ENCODE measurements at regions of chr12 and their contacts with region 1.

Region 1: DNA sequence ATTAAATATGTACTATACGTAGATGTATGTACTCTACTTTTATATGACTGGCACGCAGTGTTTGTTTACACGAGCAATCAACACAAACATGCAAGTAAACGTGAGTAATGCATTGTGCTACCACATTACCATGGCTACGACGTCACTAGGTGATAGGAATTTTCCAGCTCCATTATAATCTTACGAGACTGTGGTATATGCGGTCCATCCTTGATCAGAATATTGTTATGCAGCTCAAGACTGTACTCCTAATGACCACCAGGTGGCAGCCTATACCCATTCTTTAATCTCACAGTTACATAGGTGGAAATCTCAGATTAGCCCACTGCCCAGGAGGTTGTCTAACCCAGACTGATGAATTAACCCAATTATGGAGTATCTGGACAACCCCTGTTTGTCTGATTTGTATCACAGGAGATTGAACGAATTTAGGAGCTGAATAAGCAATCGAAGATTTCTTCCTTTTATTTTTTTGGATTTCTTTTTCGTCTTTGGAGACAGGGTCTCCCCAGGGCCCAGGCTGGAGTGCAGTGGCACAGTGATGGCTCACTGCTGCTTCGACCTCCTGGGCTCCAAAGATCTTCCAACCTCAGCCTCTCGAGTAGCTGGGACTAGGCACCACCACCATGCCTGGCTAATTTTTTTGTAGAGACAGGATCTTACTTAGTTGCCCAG is 8.7 kb upstream of the TESPA1 start:
- DNase-seq: no peak
- ATAC-seq: peak; percentile 76
- H3K4me3 ChIP-seq: no peak overlapping the region
- H3K27ac ChIP-seq: no peak overlapping the region
- H3K4me1 ChIP-seq: peaks cover 25% of the 10 kb centered on the region
- H3K27me3 ChIP-seq: no peaks in the 10 kb centered on the region
- CTCF ChIP-seq: peak; percentile 70 to 82 (median 78)
- EP300 ChIP-seq: no peak
- POLR2A ChIP-seq: no peak
- RAD21 ChIP-seq: peak; percentile 95

Region 2: DNA sequence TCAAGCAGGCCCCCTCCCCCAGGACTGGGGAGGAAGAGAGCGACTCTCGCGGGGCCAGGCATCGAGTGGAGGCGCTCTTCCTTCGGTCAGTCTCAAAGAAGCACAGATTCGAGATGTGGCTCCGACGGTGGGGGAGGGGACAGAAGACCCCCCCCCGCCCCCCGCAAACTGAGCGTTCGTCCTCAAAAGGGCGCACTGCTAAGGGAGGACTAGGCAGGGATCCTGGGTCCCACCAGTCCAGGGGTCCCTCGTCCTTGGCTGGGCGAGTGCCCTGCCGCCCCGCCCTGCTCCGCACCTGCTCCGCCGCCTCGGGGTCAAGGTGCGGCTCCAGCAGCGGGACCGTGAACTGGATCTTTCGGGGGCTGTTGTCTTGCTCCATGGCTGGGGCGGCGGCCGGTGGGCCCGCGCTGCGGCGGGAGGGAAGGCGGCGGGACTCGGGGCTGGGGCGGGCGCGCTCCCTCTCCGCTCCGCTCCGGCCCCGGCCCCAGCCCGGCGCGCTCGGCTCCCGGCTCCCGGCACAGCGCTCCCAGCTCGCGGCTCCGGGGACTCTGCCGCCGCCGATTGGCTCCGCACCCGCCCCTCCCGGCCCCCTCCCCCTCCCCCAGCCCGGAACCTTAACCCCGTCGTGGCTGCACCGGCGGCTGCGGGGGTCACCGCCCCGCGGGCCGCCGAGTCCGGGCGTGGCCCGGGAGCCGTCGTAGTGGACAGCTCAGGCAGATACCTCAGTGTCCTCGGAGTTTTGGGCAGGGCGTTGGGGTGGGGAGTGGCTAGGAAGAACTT is 405.0 kb before region 1 on chr12 and contains the start of gene PPP1R1A:
- CTCF ChIA-PET with region 1: no interaction called
- POLR2A ChIA-PET with region 1: no interaction called
- RAD21 ChIA-PET with region 1: no interaction called
- SMC1A ChIA-PET with region 1: no interaction called
- in situ Hi-C with region 1: no loop called
- intact Hi-C with region 1: no loop called
- DNase-seq: no peak
- ATAC-seq: no peak
- H3K4me3 ChIP-seq: no peak within 1 kb of the TSS
- H3K27ac ChIP-seq: no peak within 1 kb of the TSS
- H3K4me1 ChIP-seq: no peaks in the 10 kb centered on the region
- H3K27me3 ChIP-seq: peaks cover 0 to 14% of the 10 kb centered on the region in 2 experiments
- CTCF ChIP-seq: no peak
- EP300 ChIP-seq: no peak
- POLR2A ChIP-seq: no peak
- RAD21 ChIP-seq: no peak
- polyA plus RNA-seq, gene PPP1R1A: 0.03 TPM in 1 of 2 experiments, not detected in the other

Region 3: GRCh38 chr12:54701940-54702592 is 291.2 kb before region 1 on chr12:
- CTCF ChIA-PET with region 1: interaction called, 19 read pairs
- POLR2A ChIA-PET with region 1: no interaction called
- RAD21 ChIA-PET with region 1: interaction called, 5 read pairs
- SMC1A ChIA-PET with region 1: interaction called, 9 read pairs
- in situ Hi-C with region 1: no loop called
- intact Hi-C with region 1: no loop called
- DNase-seq: no peak
- ATAC-seq: peak; percentile 80
- H3K4me3 ChIP-seq: no peak overlapping the region
- H3K27ac ChIP-seq: no peak overlapping the region
- H3K4me1 ChIP-seq: no peaks in the 10 kb centered on the region
- H3K27me3 ChIP-seq: no peaks in the 10 kb centered on the region; a peak in 3 of 4 replicates
- CTCF ChIP-seq: peak; percentile 49 to 64 (median 52); a peak in 4 of 6 replicates
- EP300 ChIP-seq: no peak
- POLR2A ChIP-seq: no peak
- RAD21 ChIP-seq: peak; percentile 68

Region 4: DNA sequence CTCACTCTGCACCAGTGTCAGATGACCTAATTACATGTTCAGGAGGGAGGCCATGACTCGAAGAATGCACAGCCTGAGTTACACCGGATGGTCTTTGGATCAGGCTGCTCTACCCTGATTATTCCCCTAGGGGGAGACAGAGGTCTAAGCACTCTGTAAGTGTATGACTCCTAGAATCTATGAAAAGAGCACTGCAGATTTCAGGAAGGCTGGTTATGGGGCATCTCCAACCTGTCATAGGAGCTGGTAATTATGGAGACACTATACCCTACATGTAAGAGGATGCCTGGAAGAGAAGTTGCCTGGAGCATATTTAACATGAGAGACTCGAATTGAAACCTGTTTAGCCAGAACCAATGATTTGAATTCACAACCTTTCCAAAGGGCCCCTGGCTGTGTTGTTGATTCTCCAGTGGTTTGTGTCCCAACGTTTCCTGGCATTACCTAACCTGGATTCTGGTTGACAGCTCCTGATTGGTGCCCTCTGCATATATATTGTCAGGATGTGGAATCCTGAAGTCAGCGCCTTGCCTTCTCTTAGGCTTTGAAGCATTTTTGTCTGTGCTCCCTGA is 139.2 kb before region 1 on chr12 and contains the start of gene MUCL1:
- CTCF ChIA-PET with region 1: interaction called, 14 read pairs
- POLR2A ChIA-PET with region 1: no interaction called
- RAD21 ChIA-PET with region 1: interaction called, 5 read pairs
- SMC1A ChIA-PET with region 1: interaction called, 11 read pairs
- in situ Hi-C with region 1: no loop called
- intact Hi-C with region 1: loop called (anchors 2 kb)
- DNase-seq: peak; percentile 28
- ATAC-seq: peak; percentile 100
- H3K4me3 ChIP-seq: no peak within 1 kb of the TSS
- H3K27ac ChIP-seq: no peak within 1 kb of the TSS
- H3K4me1 ChIP-seq: no peaks in the 10 kb centered on the region
- H3K27me3 ChIP-seq: no peaks in the 10 kb centered on the region
- CTCF ChIP-seq: peak; percentile 83 to 92 (median 89); a peak in 5 of 6 replicates
- EP300 ChIP-seq: no peak
- POLR2A ChIP-seq: no peak
- RAD21 ChIP-seq: peak; percentile 93
- polyA plus RNA-seq, gene MUCL1: not detected

Region 5: DNA sequence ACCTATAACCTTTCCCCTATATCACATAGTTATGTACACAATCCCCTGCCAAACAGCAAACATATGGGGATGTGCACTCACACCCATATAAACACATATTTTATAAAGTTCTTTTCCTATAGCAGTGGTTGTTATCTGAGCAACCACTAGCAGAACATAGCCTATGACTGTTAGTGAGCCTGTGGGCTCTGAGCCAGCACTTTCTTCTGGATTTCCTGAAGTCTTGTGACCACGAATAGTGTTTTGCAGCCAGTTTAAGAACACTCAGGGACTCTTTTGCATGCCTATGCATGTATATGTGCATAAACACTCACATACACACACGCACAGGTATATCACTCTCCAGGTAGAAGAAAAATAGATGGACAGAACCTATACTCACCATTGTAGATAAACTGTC is 25.8 kb before region 1 on chr12:
- CTCF ChIA-PET with region 1: interaction called, 30 read pairs
- POLR2A ChIA-PET with region 1: no interaction called
- RAD21 ChIA-PET with region 1: interaction called, 5 read pairs
- SMC1A ChIA-PET with region 1: interaction called, 40 read pairs
- in situ Hi-C with region 1: no loop called
- intact Hi-C with region 1: no loop called
- DNase-seq: no peak
- ATAC-seq: no peak
- H3K4me3 ChIP-seq: no peak overlapping the region
- H3K27ac ChIP-seq: no peak overlapping the region
- H3K4me1 ChIP-seq: no peaks in the 10 kb centered on the region
- H3K27me3 ChIP-seq: no peaks in the 10 kb centered on the region
- CTCF ChIP-seq: no peak
- EP300 ChIP-seq: no peak
- POLR2A ChIP-seq: no peak
- RAD21 ChIP-seq: no peak

Region 6: DNA sequence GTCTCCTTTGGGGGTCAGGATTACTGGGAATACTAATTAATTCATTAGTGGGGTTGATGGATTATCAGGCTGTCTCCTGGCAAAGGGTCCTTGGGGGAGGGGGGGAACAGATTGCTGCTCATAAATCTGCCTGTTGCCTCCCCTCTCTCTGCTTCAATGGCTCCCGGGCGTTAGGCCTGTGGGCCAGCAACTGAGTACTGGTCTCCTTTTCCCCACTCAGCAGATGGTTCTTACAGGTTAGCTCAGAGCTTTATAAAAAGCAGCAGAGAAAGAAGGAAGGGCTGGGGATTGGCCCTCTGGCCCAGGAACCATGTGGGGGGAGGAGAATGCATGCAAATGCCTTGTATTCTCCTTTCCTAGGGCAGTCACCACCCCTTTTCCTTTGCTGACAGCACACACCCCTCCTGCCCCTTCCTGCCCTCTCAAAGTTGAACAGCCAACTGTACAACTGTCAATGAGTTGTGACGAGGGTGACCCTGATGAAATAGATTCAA is 24.2 kb after region 1 on chr12:
- CTCF ChIA-PET with region 1: interaction called, 11 read pairs
- POLR2A ChIA-PET with region 1: no interaction called
- RAD21 ChIA-PET with region 1: interaction called, 7 read pairs
- SMC1A ChIA-PET with region 1: interaction called, 10 read pairs
- in situ Hi-C with region 1: no loop called
- intact Hi-C with region 1: no loop called
- DNase-seq: no peak
- ATAC-seq: no peak
- H3K4me3 ChIP-seq: no peak overlapping the region
- H3K27ac ChIP-seq: no peak overlapping the region
- H3K4me1 ChIP-seq: no peaks in the 10 kb centered on the region
- H3K27me3 ChIP-seq: no peaks in the 10 kb centered on the region; a peak in 1 of 4 replicates
- CTCF ChIP-seq: no peak
- EP300 ChIP-seq: no peak
- POLR2A ChIP-seq: no peak
- RAD21 ChIP-seq: no peak

Region 7: GRCh38 chr12:55142669-55143565 is 149.6 kb after region 1 on chr12:
- CTCF ChIA-PET with region 1: interaction called, 30 read pairs
- POLR2A ChIA-PET with region 1: no interaction called
- RAD21 ChIA-PET with region 1: interaction called, 3 read pairs
- SMC1A ChIA-PET with region 1: interaction called, 9 read pairs
- in situ Hi-C with region 1: no loop called
- intact Hi-C with region 1: loop called (anchors 2 kb)
- DNase-seq: no peak
- ATAC-seq: peak; percentile 68
- H3K4me3 ChIP-seq: no peak overlapping the region
- H3K27ac ChIP-seq: no peak overlapping the region
- H3K4me1 ChIP-seq: no peaks in the 10 kb centered on the region
- H3K27me3 ChIP-seq: no peaks in the 10 kb centered on the region
- CTCF ChIP-seq: peak; percentile 61 to 72 (median 71)
- EP300 ChIP-seq: no peak
- POLR2A ChIP-seq: no peak
- RAD21 ChIP-seq: peak; percentile 58

Measured in GM12878 (cell line).